PC-3 (cell line): ENCODE measurements at regions of chr1 and their contacts with region 1.

Region 1: GRCh38 chr1:21782868-21783678 is at the start of gene USP48:
- DNase-seq: peak; percentile 97
- ATAC-seq: peak; percentile 83
- H3K4me3 ChIP-seq: peak within 1 kb of the TSS; percentile 86
- H3K27ac ChIP-seq: peak within 1 kb of the TSS; percentile 99
- H3K4me1 ChIP-seq: peaks cover 25% of the 10 kb centered on the region
- H3K27me3 ChIP-seq: no peaks in the 10 kb centered on the region
- CTCF ChIP-seq: no peak
- total RNA-seq, gene USP48: 33.3 and 34.2 TPM in 2 replicates

Region 2: DNA sequence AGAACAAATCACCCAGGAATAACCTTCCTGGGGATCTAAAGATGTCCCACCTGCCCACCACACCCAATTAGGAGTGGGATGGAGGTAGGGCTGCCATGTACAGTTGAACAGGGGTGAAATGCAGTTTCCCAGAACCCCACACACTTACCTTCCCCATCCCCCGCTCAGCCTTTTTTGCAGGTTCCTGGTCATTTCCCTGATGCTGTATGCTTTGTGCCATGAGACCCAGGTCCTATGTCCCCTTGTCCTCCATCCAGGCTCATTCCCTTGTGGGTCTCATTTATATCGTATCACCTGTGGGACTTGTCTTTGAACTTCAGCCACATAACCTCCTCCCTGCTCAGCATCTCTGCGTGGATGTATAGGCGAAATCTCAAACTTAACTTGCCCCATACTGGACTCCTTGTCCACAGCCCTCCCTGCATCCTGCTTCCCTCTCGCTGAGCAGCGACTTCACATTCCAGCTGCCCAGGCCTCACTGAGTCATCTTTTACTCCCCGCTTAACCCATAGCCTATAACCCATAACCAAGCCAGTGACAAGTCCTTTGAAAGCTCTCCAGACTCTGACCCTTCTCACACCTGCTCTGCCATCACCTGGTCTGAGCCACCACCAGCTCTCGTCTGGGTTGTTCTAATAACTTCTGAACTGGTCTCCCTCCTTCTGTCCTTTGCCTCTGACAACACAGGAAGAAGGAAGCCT is 33.7 kb after region 1 on chr1:
- CTCF ChIA-PET with region 1: interaction called, 4 read pairs
- POLR2A ChIA-PET with region 1: no interaction called
- intact Hi-C with region 1: loop called (anchors 2 kb)
- DNase-seq: peak; percentile 80
- ATAC-seq: peak; percentile 81
- H3K4me3 ChIP-seq: no peak overlapping the region
- H3K27ac ChIP-seq: 0 out of 2 replicates have a peak overlapping the region, but pooled peaks have one; percentile 1
- H3K4me1 ChIP-seq: peaks cover 14% of the 10 kb centered on the region
- H3K27me3 ChIP-seq: no peaks in the 10 kb centered on the region
- CTCF ChIP-seq: no peak

Region 3: DNA sequence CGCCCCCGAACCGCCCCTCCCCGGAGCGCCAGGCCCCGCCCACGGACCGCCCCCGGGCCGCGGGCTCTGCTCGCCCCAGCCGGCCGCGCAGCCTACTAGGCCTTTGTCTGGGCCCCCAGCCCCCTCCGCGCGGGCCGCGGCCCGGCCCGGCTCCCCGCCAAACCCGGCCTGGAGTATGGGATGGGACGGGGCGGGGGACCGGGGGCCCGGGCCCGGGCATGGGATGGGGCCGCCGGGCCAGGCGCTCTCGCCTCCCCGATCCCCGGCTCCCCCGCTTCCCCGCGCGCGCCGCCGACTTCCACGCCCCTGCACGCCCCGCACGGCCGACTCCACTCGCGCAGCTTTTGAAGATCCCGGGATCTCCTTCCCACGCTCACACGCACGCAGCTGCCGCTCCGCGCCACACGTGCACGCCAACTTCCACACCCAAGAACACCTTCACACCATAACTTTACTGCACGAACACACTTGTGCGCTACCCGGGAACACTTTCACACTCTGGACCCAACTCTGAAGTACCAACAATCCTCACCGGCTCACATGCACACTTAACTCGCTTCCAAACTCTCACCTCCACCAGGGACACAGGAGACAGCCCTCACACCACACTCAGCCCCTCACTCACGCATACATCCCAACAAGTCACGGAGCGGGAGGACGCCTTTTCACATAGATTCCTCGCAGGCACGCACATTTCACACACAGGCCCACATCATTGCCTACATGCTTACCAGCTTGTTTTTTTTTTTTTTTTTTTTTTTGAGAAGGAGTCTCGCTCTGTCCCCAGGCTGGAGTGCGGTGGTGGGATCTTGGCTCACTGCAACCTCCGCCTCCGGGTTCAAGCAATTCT is 154.5 kb after region 1 on chr1:
- CTCF ChIA-PET with region 1: no interaction called
- POLR2A ChIA-PET with region 1: no interaction called
- intact Hi-C with region 1: loop called (anchors 10 kb)
- DNase-seq: peak; percentile 84
- ATAC-seq: peak; percentile 61
- H3K4me3 ChIP-seq: peak overlapping the region; percentile 65
- H3K27ac ChIP-seq: peak overlapping the region; percentile 25
- H3K4me1 ChIP-seq: peaks cover 44% of the 10 kb centered on the region
- H3K27me3 ChIP-seq: no peaks in the 10 kb centered on the region
- CTCF ChIP-seq: no peak

Region 4: GRCh38 chr1:21963477-21964217 is 180.6 kb after region 1 on chr1:
- CTCF ChIA-PET with region 1: no interaction called
- POLR2A ChIA-PET with region 1: no interaction called
- intact Hi-C with region 1: loop called (anchors 10 kb)
- DNase-seq: peak; percentile 88
- ATAC-seq: peak; percentile 85
- H3K4me3 ChIP-seq: no peak overlapping the region
- H3K27ac ChIP-seq: no peak overlapping the region
- H3K4me1 ChIP-seq: peaks cover 23% of the 10 kb centered on the region
- H3K27me3 ChIP-seq: no peaks in the 10 kb centered on the region
- CTCF ChIP-seq: peak; percentile 90